ENCODE measurements at regions of chr2 and their contacts with region 1.

Region 1: DNA sequence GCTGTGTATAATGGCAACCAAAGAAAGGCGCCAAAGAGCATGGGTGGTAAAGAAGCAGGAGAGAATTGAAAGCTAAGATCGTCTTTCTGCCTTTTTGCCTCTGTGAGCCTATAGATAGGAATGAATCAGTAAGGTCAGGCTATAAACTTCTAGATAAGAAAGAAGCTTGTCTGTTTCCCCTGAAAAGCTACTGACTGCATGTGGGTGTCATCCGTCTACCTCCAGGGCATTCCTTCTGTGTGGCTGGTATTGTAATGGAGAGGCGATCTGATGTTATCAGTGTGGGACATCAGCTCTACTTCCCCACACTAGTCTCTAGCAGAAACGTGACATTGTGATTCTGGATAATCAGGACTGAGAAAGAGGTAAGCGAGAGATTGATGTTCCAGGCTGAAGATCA is 63.4 kb upstream of the PLA2R1 start:
- DNase-seq: no peak
- H3K4me3 ChIP-seq: no peak overlapping the region
- H3K27ac ChIP-seq: no peak overlapping the region
- H3K4me1 ChIP-seq: no peaks in the 10 kb centered on the region
- H3K27me3 ChIP-seq: no peaks in the 10 kb centered on the region
- CTCF ChIP-seq: no peak
- EP300 ChIP-seq: no peak
- POLR2A ChIP-seq: no peak

Region 2: DNA sequence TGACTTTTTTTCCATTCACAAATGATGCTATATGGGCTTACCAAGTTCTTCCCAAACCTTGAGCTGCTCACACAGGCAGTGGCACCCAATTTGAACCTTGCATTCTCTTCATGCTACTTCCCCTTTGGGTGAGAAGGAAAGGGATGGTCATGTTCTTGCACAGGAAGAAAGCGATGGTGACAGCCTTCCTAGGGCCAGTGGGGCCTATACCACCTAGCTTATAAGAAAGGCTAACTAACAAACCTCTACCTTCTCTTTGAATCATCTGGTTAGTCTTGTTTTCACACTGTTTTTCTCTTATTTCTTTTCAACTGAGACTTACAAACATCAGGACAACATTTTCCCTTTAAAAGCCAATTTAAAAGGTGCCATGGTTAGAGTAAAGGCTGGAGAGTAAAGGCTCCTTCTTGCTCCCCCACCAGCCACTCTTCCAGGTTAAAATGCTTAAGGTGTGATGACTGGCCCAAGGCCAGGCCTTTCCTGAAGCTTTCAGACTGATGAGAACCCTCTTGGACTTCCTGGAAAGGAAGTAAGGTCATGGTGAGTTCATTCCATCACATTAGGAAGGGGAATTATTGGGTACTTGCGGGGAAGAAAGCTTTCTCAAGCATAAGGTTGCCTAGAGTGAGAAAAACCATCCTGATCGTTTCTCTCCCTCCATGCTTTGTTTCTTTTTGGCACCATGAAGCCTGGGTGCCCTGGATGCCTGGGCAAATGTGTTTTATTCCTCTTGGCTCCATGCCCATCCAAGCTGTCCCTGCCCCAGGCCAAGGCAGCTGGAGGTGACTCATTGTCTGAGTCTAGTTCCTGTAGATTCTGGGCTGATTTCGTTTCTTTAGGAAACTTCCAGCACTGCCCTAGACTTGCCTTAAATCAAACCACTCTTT is 115.7 kb after region 1 on chr2:
- intact Hi-C with region 1: loop called (anchors 10 kb)
- DNase-seq: peak; percentile 64
- H3K4me3 ChIP-seq: no peak overlapping the region
- H3K27ac ChIP-seq: peak overlapping the region in 1 of 4 donors; percentile 12
- H3K4me1 ChIP-seq: peaks cover 0 to 20% (median 2%) of the 10 kb centered on the region in 4 donors
- H3K27me3 ChIP-seq: no peaks in the 10 kb centered on the region
- CTCF ChIP-seq: no peak
- EP300 ChIP-seq: no peak
- POLR2A ChIP-seq: no peak